ENCODE measurements at regions of chrX and their contacts with region 1.

Region 1: GRCh38 chrX:14095702-14096101 is 66.0 kb upstream of the GEMIN8 start:
- DNase-seq: peak in 8 of 9 donors; percentile 5 to 45 (median 24)
- ATAC-seq: peak; percentile 74
- H3K4me3 ChIP-seq: no peak overlapping the region
- H3K4me3 Mint-ChIP-seq: peak overlapping the region in 6 of 10 donors; percentile 9 to 71 (median 47)
- H3K27ac ChIP-seq: no peak overlapping the region
- H3K27ac Mint-ChIP-seq: peak overlapping the region in 1 of 9 donors; percentile 28
- H3K4me1 ChIP-seq: no peaks in the 10 kb centered on the region
- H3K4me1 Mint-ChIP-seq: peaks cover 0 to 8% (median 0%) of the 10 kb centered on the region in 7 donors
- H3K27me3 ChIP-seq: no peaks in the 10 kb centered on the region
- H3K27me3 Mint-ChIP-seq: peaks cover 0 to 4% (median under 1%) of the 10 kb centered on the region in 5 donors

Region 2: GRCh38 chrX:14039344-14039743 is 56.4 kb before region 1 on chrX:
- CTCF ChIA-PET with region 1: interaction called, 3 read pairs
- POLR2A ChIA-PET with region 1: no interaction called
- intact Hi-C with region 1: loop called in 1 of 2 experiments (anchors 1 kb)
- DNase-seq: peak in 7 of 9 donors; percentile 38 to 73 (median 62)
- ATAC-seq: peak; percentile 95
- H3K4me3 ChIP-seq: no peak overlapping the region
- H3K4me3 Mint-ChIP-seq: no peak overlapping the region
- H3K27ac ChIP-seq: no peak overlapping the region
- H3K27ac Mint-ChIP-seq: no peak overlapping the region
- H3K4me1 ChIP-seq: no peaks in the 10 kb centered on the region
- H3K4me1 Mint-ChIP-seq: no peaks in the 10 kb centered on the region
- H3K27me3 ChIP-seq: no peaks in the 10 kb centered on the region
- H3K27me3 Mint-ChIP-seq: peaks cover 0 to 21% (median 0%) of the 10 kb centered on the region in 5 donors

Region 3: GRCh38 chrX:14051416-14051815 is 44.3 kb before region 1 on chrX:
- CTCF ChIA-PET with region 1: no interaction called
- POLR2A ChIA-PET with region 1: no interaction called
- intact Hi-C with region 1: no loop called
- DNase-seq: no peak
- ATAC-seq: no peak
- H3K4me3 ChIP-seq: no peak overlapping the region
- H3K4me3 Mint-ChIP-seq: no peak overlapping the region
- H3K27ac ChIP-seq: no peak overlapping the region
- H3K27ac Mint-ChIP-seq: no peak overlapping the region
- H3K4me1 ChIP-seq: no peaks in the 10 kb centered on the region
- H3K4me1 Mint-ChIP-seq: no peaks in the 10 kb centered on the region
- H3K27me3 ChIP-seq: no peaks in the 10 kb centered on the region
- H3K27me3 Mint-ChIP-seq: peaks cover 9 to 23% (median 17%) of the 10 kb centered on the region in 5 donors

Region 4: GRCh38 chrX:14243823-14244222 is 148.1 kb after region 1 on chrX:
- CTCF ChIA-PET with region 1: no interaction called
- POLR2A ChIA-PET with region 1: no interaction called
- intact Hi-C with region 1: no loop called
- DNase-seq: no peak
- ATAC-seq: no peak
- H3K4me3 ChIP-seq: no peak overlapping the region
- H3K4me3 Mint-ChIP-seq: no peak overlapping the region
- H3K27ac ChIP-seq: no peak overlapping the region
- H3K27ac Mint-ChIP-seq: no peak overlapping the region
- H3K4me1 ChIP-seq: no peaks in the 10 kb centered on the region
- H3K4me1 Mint-ChIP-seq: no peaks in the 10 kb centered on the region
- H3K27me3 ChIP-seq: no peaks in the 10 kb centered on the region
- H3K27me3 Mint-ChIP-seq: peaks cover 0 to 3% (median 0%) of the 10 kb centered on the region in 5 donors

Region 5: GRCh38 chrX:14291666-14292500 is 196.2 kb after region 1 on chrX:
- CTCF ChIA-PET with region 1: no interaction called
- POLR2A ChIA-PET with region 1: no interaction called
- intact Hi-C with region 1: no loop called
- DNase-seq: no peak
- ATAC-seq: no peak
- H3K4me3 ChIP-seq: no peak overlapping the region
- H3K4me3 Mint-ChIP-seq: no peak overlapping the region
- H3K27ac ChIP-seq: no peak overlapping the region
- H3K27ac Mint-ChIP-seq: no peak overlapping the region
- H3K4me1 ChIP-seq: no peaks in the 10 kb centered on the region
- H3K4me1 Mint-ChIP-seq: no peaks in the 10 kb centered on the region
- H3K27me3 ChIP-seq: no peaks in the 10 kb centered on the region
- H3K27me3 Mint-ChIP-seq: no peaks in the 10 kb centered on the region

Region 6: DNA sequence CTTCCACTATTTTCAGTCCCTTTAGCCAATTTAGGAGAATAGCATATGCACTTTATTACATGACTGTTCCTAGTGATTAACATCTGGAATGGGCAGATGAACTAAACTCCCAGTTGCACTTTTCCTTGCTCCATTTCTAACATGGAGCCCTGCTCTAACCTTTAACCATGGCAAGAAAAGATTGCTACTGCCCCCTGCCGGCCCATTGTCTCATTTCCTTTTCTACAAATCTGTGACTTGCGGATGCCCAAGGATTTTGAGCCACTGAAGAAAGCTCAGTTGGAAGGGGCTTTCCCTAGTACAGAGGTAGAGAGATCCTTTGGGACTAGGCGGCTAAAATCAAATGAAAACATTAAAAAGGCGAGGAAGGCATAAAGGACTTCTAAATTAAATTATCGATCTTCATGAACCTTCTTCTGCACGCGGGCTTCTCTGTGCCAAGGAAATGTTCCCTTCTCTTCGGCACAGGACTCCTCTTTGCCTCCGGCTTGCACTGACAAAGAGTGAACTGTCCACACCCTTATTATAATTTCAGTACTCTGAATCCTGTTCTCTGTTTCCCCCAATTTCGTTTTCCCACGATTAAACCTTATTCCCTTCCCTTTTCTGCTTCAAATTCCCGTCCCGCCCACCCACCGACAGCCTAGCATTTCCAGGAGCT is 433.1 kb after region 1 on chrX:
- CTCF ChIA-PET with region 1: no interaction called
- POLR2A ChIA-PET with region 1: no interaction called
- intact Hi-C with region 1: loop called in 1 of 2 experiments (anchors 2 kb)
- DNase-seq: peak in 7 of 9 donors; percentile 2 to 34 (median 7)
- ATAC-seq: no peak
- H3K4me3 ChIP-seq: no peak overlapping the region
- H3K4me3 Mint-ChIP-seq: peak overlapping the region in 2 of 10 donors; percentile 19 to 56
- H3K27ac ChIP-seq: no peak overlapping the region
- H3K27ac Mint-ChIP-seq: no peak overlapping the region
- H3K4me1 ChIP-seq: no peaks in the 10 kb centered on the region
- H3K4me1 Mint-ChIP-seq: peaks cover 0 to 5% (median 0%) of the 10 kb centered on the region in 7 donors
- H3K27me3 ChIP-seq: no peaks in the 10 kb centered on the region
- H3K27me3 Mint-ChIP-seq: peaks cover 0 to 16% (median 4%) of the 10 kb centered on the region in 5 donors

Region 7: GRCh38 chrX:14697451-14697850 is 601.7 kb after region 1 on chrX:
- CTCF ChIA-PET with region 1: no interaction called
- POLR2A ChIA-PET with region 1: no interaction called
- intact Hi-C with region 1: loop called in 1 of 2 experiments (anchors 10 kb)
- DNase-seq: peak in 1 of 9 donors; percentile 0
- ATAC-seq: no peak
- H3K4me3 ChIP-seq: no peak overlapping the region
- H3K4me3 Mint-ChIP-seq: no peak overlapping the region
- H3K27ac ChIP-seq: no peak overlapping the region
- H3K27ac Mint-ChIP-seq: no peak overlapping the region
- H3K4me1 ChIP-seq: no peaks in the 10 kb centered on the region
- H3K4me1 Mint-ChIP-seq: no peaks in the 10 kb centered on the region
- H3K27me3 ChIP-seq: no peaks in the 10 kb centered on the region
- H3K27me3 Mint-ChIP-seq: peaks cover 0 to 2% (median 0%) of the 10 kb centered on the region in 5 donors

Region 8: DNA sequence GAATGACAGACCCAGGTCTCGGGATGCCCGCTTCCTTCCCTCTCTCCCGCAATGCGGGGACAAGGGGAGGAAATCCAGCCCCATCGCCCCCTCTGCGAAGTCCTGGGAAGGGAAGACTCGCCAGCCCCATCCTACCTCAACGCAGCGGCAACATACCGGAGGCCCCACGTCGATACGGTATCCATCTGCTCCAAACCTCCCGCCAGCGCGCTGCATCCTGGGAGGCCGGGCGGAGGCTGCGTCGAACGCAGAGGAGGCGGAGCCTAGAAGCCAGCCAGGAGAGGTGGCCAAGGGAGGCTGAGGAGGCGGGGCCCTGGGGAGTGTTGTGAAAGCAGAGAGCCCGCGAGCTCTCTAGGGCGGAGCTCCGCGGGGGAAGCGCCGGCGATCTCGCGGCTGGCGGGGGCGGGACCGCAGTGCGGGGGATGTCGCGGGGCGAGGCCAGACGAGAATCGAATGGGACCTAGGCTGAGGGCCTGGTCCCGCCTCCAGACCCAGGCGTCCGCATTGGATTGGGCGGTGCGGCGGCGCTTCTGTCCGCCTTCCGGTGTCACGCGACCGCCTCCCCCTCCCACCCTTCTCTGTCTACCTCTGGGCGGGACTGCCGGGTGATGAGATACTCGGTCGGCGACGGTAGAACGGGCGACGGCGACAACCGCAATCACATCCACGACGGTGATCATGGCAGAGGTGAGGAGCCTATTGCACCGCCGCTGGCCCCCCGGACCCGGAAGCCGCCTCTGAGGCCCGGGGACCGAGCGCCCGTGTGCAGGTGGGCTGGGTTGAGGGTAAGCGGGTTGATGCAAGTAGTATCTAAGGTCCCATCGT is 777.4 kb after region 1 on chrX and contains the starts of genes FANCB and MOSPD2:
- CTCF ChIA-PET with region 1: no interaction called
- POLR2A ChIA-PET with region 1: no interaction called
- intact Hi-C with region 1: no loop called
- DNase-seq: peak; percentile 83 to 96 (median 93)
- ATAC-seq: peak; percentile 95
- H3K4me3 ChIP-seq: peak within 1 kb of the TSS; percentile 76
- H3K4me3 Mint-ChIP-seq: peak within 1 kb of the TSS; percentile 82 to 94 (median 88)
- H3K27ac ChIP-seq: peak within 1 kb of the TSS; percentile 76
- H3K27ac Mint-ChIP-seq: peak within 1 kb of the TSS; percentile 75 to 93 (median 88)
- H3K4me1 ChIP-seq: peaks cover 4 to 9% of the 10 kb centered on the region in 2 donors
- H3K4me1 Mint-ChIP-seq: peaks cover 0 to 34% (median 14%) of the 10 kb centered on the region in 7 donors
- H3K27me3 ChIP-seq: no peaks in the 10 kb centered on the region
- H3K27me3 Mint-ChIP-seq: no peaks in the 10 kb centered on the region
- total RNA-seq, gene FANCB: 3.3 to 8.3 (median 4.0) TPM
- total RNA-seq, gene MOSPD2: 7.1 to 15.7 (median 13.4) TPM